ENCODE measurements at regions of chr22 and their contacts with region 1.

Region 1: DNA sequence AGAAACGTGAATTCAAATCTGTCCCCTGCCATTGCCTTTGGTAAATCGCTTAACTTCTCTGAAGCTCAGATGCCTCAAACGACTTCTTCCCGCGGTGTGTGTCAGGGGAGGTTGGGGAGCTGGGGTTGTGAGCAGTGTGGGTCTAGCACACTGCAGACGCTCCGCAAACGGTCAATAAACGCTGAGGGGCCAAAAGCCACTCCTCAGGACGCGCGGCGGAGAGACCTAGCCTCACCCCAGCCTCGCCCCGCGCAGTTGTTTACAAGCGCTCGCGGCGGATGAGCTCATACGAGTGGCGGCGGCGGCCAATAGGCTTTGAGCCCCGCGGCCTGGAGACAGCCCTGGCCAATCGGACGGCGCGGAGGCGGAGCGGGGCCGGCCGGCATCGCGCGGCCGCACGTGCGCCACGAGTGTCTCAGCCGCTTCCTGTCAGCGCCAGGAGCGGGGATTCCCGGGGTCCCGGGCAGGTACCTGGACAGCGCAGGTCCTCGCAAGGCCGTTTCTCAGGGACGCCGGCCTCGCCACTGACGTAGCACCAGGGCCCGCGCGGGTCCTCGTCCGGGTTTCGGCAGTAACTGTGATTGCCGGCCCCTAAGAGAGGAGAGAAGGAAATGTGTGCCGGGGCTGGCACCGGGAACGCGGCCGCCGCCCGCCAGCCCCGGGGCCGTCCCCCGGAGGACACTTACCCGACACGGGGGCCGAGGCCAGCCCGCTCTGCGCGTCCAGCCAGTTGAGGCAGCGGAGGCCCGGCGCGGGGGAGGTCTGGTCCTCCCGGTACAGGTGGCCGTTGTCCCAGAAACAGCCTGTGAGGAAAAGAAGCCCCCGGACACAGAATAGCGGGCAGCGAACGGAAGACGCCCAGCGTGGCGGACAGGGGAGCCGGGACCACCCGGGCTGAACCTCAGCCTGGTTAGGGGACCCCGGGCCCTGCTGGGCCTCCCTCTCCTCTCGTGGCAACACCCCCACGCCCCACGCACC is 1.5 kb downstream of the PIK3IP1 start:
- DNase-seq: peak; percentile 93 to 98 (median 97)
- H3K4me3 ChIP-seq: peak overlapping the region; percentile 93
- H3K4me3 Mint-ChIP-seq: peak overlapping the region; percentile 98 to 100 (median 99)
- H3K27ac ChIP-seq: peak overlapping the region; percentile 98
- H3K27ac Mint-ChIP-seq: peak overlapping the region; percentile 98 to 100 (median 100)
- H3K4me1 ChIP-seq: peaks cover 59% of the 10 kb centered on the region
- H3K4me1 Mint-ChIP-seq: peaks cover 62 to 78% (median 72%) of the 10 kb centered on the region in 3 donors
- H3K27me3 ChIP-seq: no peaks in the 10 kb centered on the region
- H3K27me3 Mint-ChIP-seq: peaks cover 0 to 15% of the 10 kb centered on the region in 2 donors

Region 2: GRCh38 chr22:30968924-30969539 is 321.8 kb before region 1 on chr22 and contains the start of gene TUG1:
- CTCF ChIA-PET with region 1: interaction called, 3 read pairs
- POLR2A ChIA-PET with region 1: interaction called, 17 read pairs
- DNase-seq: peak; percentile 97 to 98 (median 97)
- H3K4me3 ChIP-seq: peak within 1 kb of the TSS; percentile 77
- H3K4me3 Mint-ChIP-seq: peak within 1 kb of the TSS; percentile 88 to 99 (median 95)
- H3K27ac ChIP-seq: peak within 1 kb of the TSS; percentile 74
- H3K27ac Mint-ChIP-seq: peak within 1 kb of the TSS; percentile 89 to 99 (median 96)
- H3K4me1 ChIP-seq: peaks cover 24% of the 10 kb centered on the region
- H3K4me1 Mint-ChIP-seq: peaks cover 39 to 75% (median 59%) of the 10 kb centered on the region in 3 donors
- H3K27me3 ChIP-seq: no peaks in the 10 kb centered on the region
- H3K27me3 Mint-ChIP-seq: peaks cover 0 to 3% of the 10 kb centered on the region in 2 donors
- total RNA-seq, gene TUG1: 46.6 to 49.9 TPM

Region 3: DNA sequence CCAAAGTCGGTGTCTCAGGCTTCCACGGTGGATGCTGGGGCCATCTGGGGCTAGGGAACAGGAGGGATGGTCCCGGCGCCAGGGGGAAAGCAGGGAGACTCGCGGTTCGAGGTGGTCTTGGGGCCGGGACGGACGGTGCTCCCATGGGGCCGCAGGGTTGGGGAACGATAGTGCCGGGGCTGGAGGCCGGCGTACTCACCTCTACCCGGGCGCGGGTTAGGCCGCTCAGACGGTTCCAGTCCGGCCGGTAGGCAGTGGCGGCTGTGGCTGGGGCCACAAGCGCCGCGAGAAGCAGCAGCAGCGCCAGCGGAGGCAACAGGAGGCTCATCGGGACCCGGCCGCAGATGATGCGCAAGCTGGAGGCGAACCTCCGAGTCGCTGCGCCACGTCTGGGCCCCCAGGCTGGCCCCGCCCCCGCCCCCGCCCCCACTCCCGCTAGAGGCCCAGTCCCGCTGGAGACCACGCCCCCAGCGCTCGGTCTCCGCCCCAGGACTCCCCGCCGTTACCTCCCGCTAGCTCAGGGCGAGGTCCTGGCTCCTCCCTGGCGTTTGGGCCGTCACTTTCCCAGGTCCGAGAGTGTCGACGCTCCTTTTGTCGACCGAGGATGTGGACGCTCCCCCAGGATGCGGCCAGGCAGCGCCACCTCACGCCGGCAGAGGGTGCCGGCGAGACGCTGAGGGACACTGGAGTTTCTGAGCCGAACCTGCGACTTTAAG is 183.4 kb before region 1 on chr22 and contains the start of gene SELENOM:
- CTCF ChIA-PET with region 1: interaction called, 3 read pairs
- POLR2A ChIA-PET with region 1: interaction called, 10 read pairs
- DNase-seq: peak; percentile 81 to 91 (median 85)
- H3K4me3 ChIP-seq: peak within 1 kb of the TSS; percentile 92
- H3K4me3 Mint-ChIP-seq: peak within 1 kb of the TSS; percentile 84 to 96 (median 94)
- H3K27ac ChIP-seq: peak within 1 kb of the TSS; percentile 68
- H3K27ac Mint-ChIP-seq: peak within 1 kb of the TSS; percentile 72 to 95 (median 89)
- H3K4me1 ChIP-seq: peaks cover 19% of the 10 kb centered on the region
- H3K4me1 Mint-ChIP-seq: peaks cover 22 to 32% (median 29%) of the 10 kb centered on the region in 3 donors
- H3K27me3 ChIP-seq: no peaks in the 10 kb centered on the region
- H3K27me3 Mint-ChIP-seq: no peaks in the 10 kb centered on the region
- total RNA-seq, gene SELENOM: 14.6 to 15.4 TPM

Region 4: DNA sequence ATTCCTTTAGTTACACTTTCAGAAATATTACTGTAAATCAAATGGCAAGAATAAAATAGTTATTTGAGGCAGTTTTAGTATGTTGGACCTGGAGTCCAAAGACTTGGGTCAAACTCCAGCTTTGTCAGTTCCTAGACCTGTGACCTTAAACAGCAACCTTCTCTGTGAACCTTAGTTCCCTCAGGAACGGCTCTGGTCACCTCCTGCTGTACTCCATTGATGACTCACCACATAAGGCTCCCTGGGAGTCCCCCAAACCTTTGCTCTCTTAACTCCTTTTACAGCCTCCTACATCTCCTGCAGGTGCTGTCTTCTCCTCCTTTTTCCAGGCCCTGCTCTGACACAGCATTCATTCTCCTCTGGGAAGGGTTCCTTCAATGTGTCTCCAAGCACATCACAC is 49.6 kb before region 1 on chr22:
- CTCF ChIA-PET with region 1: no interaction called
- POLR2A ChIA-PET with region 1: no interaction called
- DNase-seq: no peak
- H3K4me3 ChIP-seq: no peak overlapping the region
- H3K4me3 Mint-ChIP-seq: no peak overlapping the region
- H3K27ac ChIP-seq: no peak overlapping the region
- H3K27ac Mint-ChIP-seq: peak overlapping the region in 3 of 8 donors; percentile 16 to 69 (median 22)
- H3K4me1 ChIP-seq: no peaks in the 10 kb centered on the region
- H3K4me1 Mint-ChIP-seq: peaks cover 3 to 36% (median 30%) of the 10 kb centered on the region in 3 donors
- H3K27me3 ChIP-seq: no peaks in the 10 kb centered on the region
- H3K27me3 Mint-ChIP-seq: no peaks in the 10 kb centered on the region

Region 5: DNA sequence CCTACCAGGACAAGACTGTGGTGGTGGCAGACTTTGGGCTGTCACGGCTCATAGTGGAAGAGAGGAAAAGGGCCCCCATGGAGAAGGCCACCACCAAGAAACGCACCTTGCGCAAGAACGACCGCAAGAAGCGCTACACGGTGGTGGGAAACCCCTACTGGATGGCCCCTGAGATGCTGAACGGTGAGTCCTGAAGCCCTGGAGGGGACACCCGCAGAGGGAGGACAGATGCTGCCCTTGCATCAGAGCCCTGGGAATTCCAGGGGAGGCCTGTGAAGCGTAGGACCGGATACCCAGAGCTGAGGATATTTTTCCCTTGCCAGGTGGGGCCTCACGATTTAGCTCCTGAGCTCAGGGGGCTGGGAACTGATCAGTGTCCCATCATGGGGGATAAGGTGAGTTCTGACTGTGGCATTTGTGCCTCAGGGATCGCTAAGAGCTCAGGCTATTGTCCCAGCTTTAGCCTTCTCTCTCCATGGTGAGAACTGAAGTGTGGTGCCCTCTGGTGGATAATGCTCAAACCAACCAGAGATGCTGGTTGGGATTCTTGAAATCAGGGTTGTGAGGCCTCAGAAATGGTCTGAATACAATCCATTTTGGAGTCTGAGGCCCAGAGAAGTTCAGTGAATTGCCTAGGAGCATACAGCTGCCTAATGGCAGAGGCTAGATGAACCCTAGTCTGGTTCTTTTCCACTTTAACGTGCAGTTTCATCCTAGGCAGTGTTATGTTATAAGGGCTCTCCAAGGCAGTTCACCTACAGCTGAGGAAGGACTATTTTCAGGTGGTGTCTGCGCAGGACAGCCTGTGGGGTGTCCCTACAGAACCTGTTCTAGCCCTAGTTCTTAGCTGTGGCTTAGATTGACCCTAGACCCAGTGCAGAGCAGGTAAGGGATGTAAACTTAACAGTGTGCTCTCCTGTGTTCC is 18.0 kb before region 1 on chr22:
- CTCF ChIA-PET with region 1: interaction called, 55 read pairs
- POLR2A ChIA-PET with region 1: interaction called, 146 read pairs
- DNase-seq: peak in 3 of 5 donors; percentile 38 to 63 (median 57)
- H3K4me3 ChIP-seq: no peak overlapping the region
- H3K4me3 Mint-ChIP-seq: no peak overlapping the region
- H3K27ac ChIP-seq: no peak overlapping the region
- H3K27ac Mint-ChIP-seq: peak overlapping the region; percentile 55 to 95 (median 80)
- H3K4me1 ChIP-seq: peaks cover 39% of the 10 kb centered on the region
- H3K4me1 Mint-ChIP-seq: peaks cover 41 to 61% (median 43%) of the 10 kb centered on the region in 3 donors
- H3K27me3 ChIP-seq: no peaks in the 10 kb centered on the region
- H3K27me3 Mint-ChIP-seq: no peaks in the 10 kb centered on the region

Region 6: GRCh38 chr22:31278622-31279326 is 12.0 kb before region 1 on chr22:
- CTCF ChIA-PET with region 1: interaction called, 55 read pairs
- POLR2A ChIA-PET with region 1: interaction called, 146 read pairs
- DNase-seq: peak in 3 of 5 donors; percentile 61 to 83 (median 66)
- H3K4me3 ChIP-seq: peak overlapping the region; percentile 28
- H3K4me3 Mint-ChIP-seq: peak overlapping the region; percentile 2 to 78 (median 64)
- H3K27ac ChIP-seq: peak overlapping the region; percentile 35
- H3K27ac Mint-ChIP-seq: peak overlapping the region; percentile 86 to 99 (median 96)
- H3K4me1 ChIP-seq: peaks cover 86% of the 10 kb centered on the region
- H3K4me1 Mint-ChIP-seq: peaks cover 72 to 83% (median 81%) of the 10 kb centered on the region in 3 donors
- H3K27me3 ChIP-seq: no peaks in the 10 kb centered on the region
- H3K27me3 Mint-ChIP-seq: peaks cover 0 to 3% of the 10 kb centered on the region in 2 donors

Region 7: DNA sequence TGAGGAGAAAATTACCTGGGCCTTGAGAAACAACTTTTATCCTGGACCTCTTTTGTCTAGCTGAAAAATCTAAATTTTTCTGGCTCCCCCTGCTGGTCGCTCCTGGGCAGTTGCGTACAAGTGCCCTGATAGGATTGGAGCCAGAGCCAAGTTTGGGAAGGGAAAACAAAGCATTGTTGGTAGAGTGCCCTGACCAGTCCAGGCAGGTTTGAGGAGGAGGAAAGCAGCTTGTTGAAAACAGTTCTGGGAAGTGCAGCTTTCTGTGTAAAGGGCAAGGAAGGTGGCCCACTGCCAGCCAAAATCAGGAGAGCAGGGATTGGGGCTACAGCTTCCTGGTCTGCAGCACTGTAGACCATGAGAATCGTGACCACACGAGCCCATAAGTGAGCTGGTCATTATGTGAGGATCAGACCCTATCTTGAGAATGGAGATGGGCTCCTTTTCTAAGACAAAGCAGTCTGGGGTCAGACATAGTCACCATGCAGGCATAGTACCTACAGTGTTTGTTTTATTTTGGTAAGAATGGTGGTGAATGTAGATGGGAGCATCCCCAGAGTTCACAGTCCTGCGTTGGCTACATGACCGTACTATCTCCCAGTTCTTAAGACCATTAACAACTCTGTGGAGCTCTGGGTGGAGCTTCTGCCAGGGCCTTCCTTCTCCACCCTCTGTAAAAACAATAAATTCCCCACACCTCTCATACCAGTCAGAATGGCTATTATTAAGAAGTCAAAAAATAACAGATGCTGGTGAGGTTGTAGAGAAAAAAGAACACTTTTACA is 22.8 kb after region 1 on chr22:
- CTCF ChIA-PET with region 1: interaction called, 52 read pairs
- POLR2A ChIA-PET with region 1: interaction called, 37 read pairs
- DNase-seq: peak; percentile 45 to 71 (median 51)
- H3K4me3 ChIP-seq: no peak overlapping the region
- H3K4me3 Mint-ChIP-seq: no peak overlapping the region
- H3K27ac ChIP-seq: no peak overlapping the region
- H3K27ac Mint-ChIP-seq: peak overlapping the region in 6 of 8 donors; percentile 2 to 74 (median 8)
- H3K4me1 ChIP-seq: peaks cover 17% of the 10 kb centered on the region
- H3K4me1 Mint-ChIP-seq: peaks cover 6 to 15% (median 10%) of the 10 kb centered on the region in 3 donors
- H3K27me3 ChIP-seq: no peaks in the 10 kb centered on the region
- H3K27me3 Mint-ChIP-seq: no peaks in the 10 kb centered on the region

Region 8: GRCh38 chr22:31345331-31346254 is 54.8 kb after region 1 on chr22:
- CTCF ChIA-PET with region 1: interaction called, 12 read pairs
- POLR2A ChIA-PET with region 1: interaction called, 39 read pairs
- DNase-seq: peak; percentile 86 to 96 (median 93)
- H3K4me3 ChIP-seq: peak overlapping the region; percentile 76
- H3K4me3 Mint-ChIP-seq: peak overlapping the region; percentile 86 to 97 (median 90)
- H3K27ac ChIP-seq: peak overlapping the region; percentile 16
- H3K27ac Mint-ChIP-seq: peak overlapping the region; percentile 91 to 100 (median 94)
- H3K4me1 ChIP-seq: peaks cover 48% of the 10 kb centered on the region
- H3K4me1 Mint-ChIP-seq: peaks cover 45 to 58% (median 48%) of the 10 kb centered on the region in 3 donors
- H3K27me3 ChIP-seq: no peaks in the 10 kb centered on the region
- H3K27me3 Mint-ChIP-seq: peaks cover 0 to 1% of the 10 kb centered on the region in 2 donors

Region 9: DNA sequence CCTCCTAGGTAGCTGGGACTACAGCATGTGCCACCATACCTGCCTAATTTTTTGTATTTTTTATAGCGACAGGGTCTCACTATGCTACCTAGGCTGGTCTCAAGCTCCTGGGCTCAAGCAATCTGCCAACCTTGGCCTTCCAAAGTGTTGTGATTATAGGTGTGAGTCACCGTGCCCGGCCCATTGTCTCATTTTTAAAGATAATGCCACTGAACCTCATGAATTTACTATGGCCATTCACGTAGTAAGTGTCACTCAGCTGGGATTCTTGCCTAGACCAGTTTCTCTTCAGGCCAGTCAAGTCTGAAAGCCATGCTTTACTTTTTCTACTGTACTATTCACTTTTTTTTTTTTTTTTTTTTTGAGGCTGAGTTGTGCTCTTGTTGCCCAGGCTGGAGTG is 485.4 kb after region 1 on chr22:
- CTCF ChIA-PET with region 1: no interaction called
- POLR2A ChIA-PET with region 1: no interaction called
- DNase-seq: no peak
- H3K4me3 ChIP-seq: no peak overlapping the region
- H3K4me3 Mint-ChIP-seq: no peak overlapping the region
- H3K27ac ChIP-seq: no peak overlapping the region
- H3K27ac Mint-ChIP-seq: no peak overlapping the region
- H3K4me1 ChIP-seq: no peaks in the 10 kb centered on the region
- H3K4me1 Mint-ChIP-seq: no peaks in the 10 kb centered on the region
- H3K27me3 ChIP-seq: no peaks in the 10 kb centered on the region
- H3K27me3 Mint-ChIP-seq: no peaks in the 10 kb centered on the region